Prostate gland (tissue), 2 donors: ENCODE measurements at regions of chr18 and their contacts with region 1.

Region 1: DNA sequence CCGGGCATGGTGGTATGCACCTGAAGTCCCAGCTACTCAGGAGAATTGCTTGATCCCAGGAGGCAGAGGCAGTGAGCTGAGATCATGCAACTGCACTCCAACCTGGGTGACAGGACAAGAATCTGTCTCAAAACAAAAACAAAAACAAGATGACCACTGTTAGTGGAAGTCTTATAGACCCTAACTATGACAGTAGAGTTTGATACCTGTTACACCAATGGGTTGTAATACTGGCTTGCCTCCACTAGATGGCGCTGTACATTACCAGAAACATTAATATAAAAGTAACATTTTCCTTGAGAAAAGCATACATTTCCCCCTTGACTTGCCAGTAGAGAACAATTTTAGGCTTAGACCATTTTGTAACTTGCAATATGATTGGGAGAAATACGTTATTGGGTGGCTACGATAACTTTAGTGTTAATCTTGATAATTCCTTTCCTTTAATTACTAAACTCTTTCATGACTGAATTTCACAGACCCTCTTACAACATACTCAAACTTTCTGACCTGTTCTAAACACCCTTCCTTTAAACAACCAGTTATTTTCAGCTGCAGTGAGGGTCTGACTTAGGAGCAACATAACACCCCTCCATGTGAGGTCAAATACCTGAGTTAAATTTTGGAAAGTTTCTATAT is 19.5 kb downstream of the SLC25A52 start:
- DNase-seq: peak; percentile 44
- H3K4me3 ChIP-seq: no peak overlapping the region
- H3K27ac ChIP-seq: no peak overlapping the region
- H3K4me1 ChIP-seq: no peaks in the 10 kb centered on the region
- H3K27me3 ChIP-seq: no peaks in the 10 kb centered on the region
- CTCF ChIP-seq: peak; percentile 80 to 95 (median 86)
- POLR2A ChIP-seq: no peak

Region 2: DNA sequence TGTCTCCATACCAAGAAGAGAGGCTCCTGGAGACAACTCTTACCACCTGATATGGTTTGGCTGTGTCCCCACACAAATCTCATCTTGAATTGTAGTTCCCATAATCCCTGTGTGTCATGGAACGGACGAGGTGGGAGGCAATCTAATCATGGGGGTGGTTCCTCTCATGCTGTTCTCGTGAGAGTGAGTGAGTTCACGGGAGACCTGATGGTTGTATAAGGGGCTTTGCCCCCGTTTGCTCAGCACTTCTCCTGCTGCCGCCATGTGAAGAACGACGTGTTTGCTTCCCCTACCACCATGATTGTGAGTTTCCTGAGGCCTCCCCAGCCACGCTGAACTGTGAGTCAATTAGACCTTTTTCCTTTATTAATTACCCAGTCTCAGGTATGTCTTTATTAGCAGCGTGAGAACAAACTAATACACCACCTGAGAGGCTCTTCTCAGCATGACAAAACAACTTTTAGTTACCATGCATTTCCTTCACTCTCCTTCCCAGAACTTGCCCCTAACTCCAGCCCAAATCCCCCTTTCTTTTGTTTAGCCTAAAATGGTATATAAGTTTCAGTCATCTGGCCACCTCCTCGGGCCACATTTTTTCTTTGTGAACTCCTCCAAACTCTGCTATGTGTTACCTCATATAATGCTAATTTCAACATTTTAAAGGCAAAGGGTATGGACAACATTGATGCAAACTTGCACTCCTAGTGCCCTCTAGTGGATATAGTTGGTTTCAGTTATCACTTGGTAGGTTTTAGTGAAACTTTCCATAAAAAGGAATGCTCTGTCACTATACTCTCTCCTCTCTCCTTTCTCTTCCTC is 78.1 kb after region 1 on chr18:
- intact Hi-C with region 1: loop called (anchors 2 kb)
- DNase-seq: peak; percentile 12
- H3K4me3 ChIP-seq: no peak overlapping the region
- H3K27ac ChIP-seq: no peak overlapping the region
- H3K4me1 ChIP-seq: no peaks in the 10 kb centered on the region
- H3K27me3 ChIP-seq: no peaks in the 10 kb centered on the region
- CTCF ChIP-seq: peak; percentile 31 to 78 (median 74)
- POLR2A ChIP-seq: no peak

Region 3: DNA sequence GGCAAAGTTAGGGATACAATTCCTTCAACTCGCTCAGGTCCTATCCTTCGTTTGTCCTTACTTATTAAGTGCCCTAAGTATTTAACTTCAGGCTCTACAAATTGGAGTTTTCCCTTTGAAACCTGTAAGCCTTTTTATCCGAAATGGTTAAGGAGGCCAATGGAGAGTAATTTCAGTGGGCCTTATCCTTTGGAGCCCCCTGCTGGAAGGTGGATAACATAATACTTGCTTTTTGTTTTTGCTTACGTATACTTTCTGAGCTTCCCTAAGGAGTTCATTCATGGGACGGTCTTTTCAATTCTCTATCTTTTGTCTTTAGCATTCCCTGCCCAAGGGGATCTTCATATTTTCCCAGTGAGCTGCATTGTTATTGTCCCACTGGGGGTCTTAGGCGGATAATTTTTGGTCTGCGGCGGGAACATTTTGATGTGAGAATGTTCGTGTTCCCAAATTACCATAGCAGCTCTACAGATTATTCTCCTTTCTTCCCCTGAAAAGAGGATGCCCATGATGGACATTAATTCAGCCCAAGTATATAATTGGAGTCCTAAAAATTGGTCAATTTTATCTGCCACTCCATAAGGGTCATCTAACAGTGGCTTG is 236.2 kb after region 1 on chr18:
- intact Hi-C with region 1: no loop called
- DNase-seq: no peak
- H3K4me3 ChIP-seq: no peak overlapping the region
- H3K27ac ChIP-seq: no peak overlapping the region
- H3K4me1 ChIP-seq: no peaks in the 10 kb centered on the region
- H3K27me3 ChIP-seq: no peaks in the 10 kb centered on the region
- CTCF ChIP-seq: peak; percentile 29 to 47 (median 44)
- POLR2A ChIP-seq: no peak